Mammary epithelial cell (primary cell): ENCODE measurements at regions of chrX and their contacts with region 1.

Region 1: GRCh38 chrX:136711147-136711546 is 63.2 kb downstream of the CD40LG start:
- DNase-seq: peak; percentile 42
- H3K4me3 ChIP-seq: no peak overlapping the region
- H3K27ac ChIP-seq: no peak overlapping the region
- H3K4me1 ChIP-seq: no peaks in the 10 kb centered on the region
- H3K27me3 ChIP-seq: peaks cover 2% of the 10 kb centered on the region
- CTCF ChIP-seq: peak; percentile 16 to 61

Region 2: DNA sequence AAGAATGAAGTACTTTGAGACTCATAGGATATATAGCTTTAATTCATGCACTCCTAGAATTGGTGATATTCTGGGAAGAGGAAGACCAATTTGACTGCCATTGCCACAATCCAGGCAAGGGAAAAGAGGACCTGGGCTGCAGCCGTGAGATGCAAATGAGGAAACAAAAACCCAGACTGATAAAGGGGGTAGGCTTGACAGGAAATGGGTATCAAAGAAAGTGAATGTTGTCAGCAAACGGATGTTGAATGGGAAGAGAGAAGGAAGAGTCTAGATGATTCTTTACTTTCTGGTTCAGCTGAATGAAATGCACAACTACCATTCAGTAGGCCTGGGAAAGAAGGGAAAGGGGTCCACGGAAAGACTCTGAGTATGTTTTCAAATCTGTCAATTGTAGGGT is 86.6 kb after region 1 on chrX:
- CTCF ChIA-PET with region 1: no interaction called
- dilution Hi-C with region 1: no loop called
- in situ Hi-C with region 1: no loop called
- intact Hi-C with region 1: no loop called
- DNase-seq: no peak
- H3K4me3 ChIP-seq: no peak overlapping the region
- H3K27ac ChIP-seq: no peak overlapping the region
- H3K4me1 ChIP-seq: no peaks in the 10 kb centered on the region
- H3K27me3 ChIP-seq: no peaks in the 10 kb centered on the region
- CTCF ChIP-seq: no peak

Region 3: GRCh38 chrX:136920001-136920400 is 208.9 kb after region 1 on chrX:
- CTCF ChIA-PET with region 1: no interaction called
- dilution Hi-C with region 1: no loop called
- in situ Hi-C with region 1: loop called (anchors 10 to 25 kb)
- intact Hi-C with region 1: loop called (anchors 1 kb)
- DNase-seq: no peak
- H3K4me3 ChIP-seq: no peak overlapping the region
- H3K27ac ChIP-seq: no peak overlapping the region
- H3K4me1 ChIP-seq: no peaks in the 10 kb centered on the region
- H3K27me3 ChIP-seq: no peaks in the 10 kb centered on the region
- CTCF ChIP-seq: no peak

Region 4: DNA sequence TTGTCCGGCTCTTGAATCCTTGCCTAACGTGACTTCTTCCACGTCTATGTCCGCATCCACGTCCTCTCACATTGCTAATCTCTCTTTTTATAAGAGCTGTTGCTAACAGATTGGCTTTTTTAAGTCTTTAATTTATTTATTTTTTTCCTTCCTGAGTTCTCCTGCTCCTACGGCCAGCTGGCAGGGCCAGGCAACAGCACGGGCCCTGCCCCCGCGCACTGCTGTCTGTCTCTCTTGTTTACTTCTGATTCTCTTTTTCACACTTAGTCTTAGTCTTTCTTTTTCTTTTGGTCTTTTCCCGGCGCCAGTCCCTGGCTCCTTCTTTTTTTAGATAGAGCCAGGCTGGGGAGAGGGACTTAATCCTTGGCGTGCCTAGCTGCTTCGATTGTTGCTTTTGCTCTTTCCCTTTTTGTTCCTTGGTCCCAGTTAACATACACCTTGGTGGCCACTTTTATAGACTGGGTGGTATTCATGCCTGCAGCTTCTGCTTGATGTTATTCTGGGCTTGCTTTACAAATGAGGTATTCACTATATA is 222.5 kb after region 1 on chrX:
- CTCF ChIA-PET with region 1: no interaction called
- dilution Hi-C with region 1: no loop called
- in situ Hi-C with region 1: loop called (anchors 10 to 25 kb)
- intact Hi-C with region 1: no loop called
- DNase-seq: no peak
- H3K4me3 ChIP-seq: no peak overlapping the region
- H3K27ac ChIP-seq: no peak overlapping the region
- H3K4me1 ChIP-seq: no peaks in the 10 kb centered on the region
- H3K27me3 ChIP-seq: no peaks in the 10 kb centered on the region
- CTCF ChIP-seq: no peak